ENCODE measurements at regions of chr6 and their contacts with region 1.

Region 1: DNA sequence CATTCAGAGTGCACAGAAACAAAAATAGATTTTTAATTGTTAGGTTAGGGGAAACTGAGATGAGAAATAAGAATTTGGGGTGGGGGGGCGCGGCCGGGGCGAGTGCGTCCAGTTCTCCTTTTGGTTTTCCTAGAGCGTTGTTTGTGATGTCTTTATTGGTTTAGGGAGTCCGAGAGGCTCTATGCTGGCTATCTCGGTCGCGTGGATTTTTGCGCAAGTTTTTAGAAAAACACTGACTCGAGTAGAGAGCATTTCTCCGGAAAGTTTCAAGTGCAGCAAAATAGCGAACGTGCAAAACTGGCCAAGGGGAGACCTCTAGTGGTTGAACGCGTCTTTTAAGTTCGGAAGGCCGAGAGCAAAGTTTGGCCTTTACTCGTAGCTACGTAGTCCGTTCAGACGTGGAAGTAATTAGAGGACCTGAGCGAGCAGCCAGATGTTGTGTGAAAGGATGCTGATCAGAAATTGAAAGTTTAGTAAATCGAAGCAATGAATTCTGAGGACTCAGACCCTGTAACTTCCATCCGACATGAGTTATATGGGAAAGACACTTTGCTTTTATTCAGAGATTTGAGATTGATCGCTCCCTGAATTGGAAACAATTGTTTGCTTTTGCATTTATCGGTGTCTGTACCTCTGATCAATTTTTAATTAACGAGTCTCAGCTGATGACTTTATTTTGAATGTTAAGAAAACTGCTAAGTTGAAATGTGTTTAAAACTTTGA is 2.7 kb downstream of the L3MBTL3 start:
- DNase-seq: peak; percentile 84
- H3K4me3 ChIP-seq: peak overlapping the region; percentile 57 to 78 (median 76)
- H3K27ac ChIP-seq: no peak overlapping the region
- H3K4me1 ChIP-seq: peaks cover 8% of the 10 kb centered on the region
- H3K27me3 ChIP-seq: no peaks in the 10 kb centered on the region
- CTCF ChIP-seq: peak; percentile 73 to 88

Region 2: DNA sequence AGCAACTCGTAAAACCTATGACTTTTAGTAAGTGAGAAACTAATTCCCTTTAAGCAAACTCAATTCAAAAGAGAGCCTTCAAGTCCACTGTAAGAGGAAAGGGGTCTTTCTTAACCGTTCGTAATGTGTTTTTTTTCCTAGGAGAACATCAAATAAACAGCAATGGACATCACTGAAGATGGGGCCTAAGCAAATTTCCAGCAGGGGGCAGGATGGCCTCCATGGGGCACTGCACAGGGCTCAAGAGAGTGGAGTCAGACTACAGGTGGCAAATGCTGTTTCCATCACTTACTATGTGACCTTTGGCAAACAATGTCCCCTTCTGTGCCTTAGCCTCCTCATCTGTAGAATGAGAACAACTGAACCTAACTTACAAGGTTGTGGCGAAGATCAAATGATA is 399.8 kb before region 1 on chr6:
- CTCF ChIA-PET with region 1: no interaction called
- dilution Hi-C with region 1: no loop called
- in situ Hi-C with region 1: loop called in 1 of 2 experiments (anchors 25 kb)
- intact Hi-C with region 1: no loop called
- DNase-seq: no peak
- H3K4me3 ChIP-seq: no peak overlapping the region
- H3K27ac ChIP-seq: no peak overlapping the region
- H3K4me1 ChIP-seq: peaks cover 8% of the 10 kb centered on the region
- H3K27me3 ChIP-seq: no peaks in the 10 kb centered on the region
- CTCF ChIP-seq: peak in 1 of 2 donors; percentile 52

Region 3: GRCh38 chr6:129774697-129775447 is 246.2 kb before region 1 on chr6:
- CTCF ChIA-PET with region 1: no interaction called
- dilution Hi-C with region 1: no loop called
- in situ Hi-C with region 1: no loop called
- intact Hi-C with region 1: loop called (anchors 1 kb)
- DNase-seq: peak; percentile 53
- H3K4me3 ChIP-seq: no peak overlapping the region
- H3K27ac ChIP-seq: no peak overlapping the region
- H3K4me1 ChIP-seq: no peaks in the 10 kb centered on the region
- H3K27me3 ChIP-seq: no peaks in the 10 kb centered on the region
- CTCF ChIP-seq: peak; percentile 99

Region 4: GRCh38 chr6:129893640-129894039 is 127.4 kb before region 1 on chr6:
- CTCF ChIA-PET with region 1: no interaction called
- dilution Hi-C with region 1: no loop called
- in situ Hi-C with region 1: no loop called
- intact Hi-C with region 1: loop called (anchors 1 kb)
- DNase-seq: peak; percentile 15
- H3K4me3 ChIP-seq: no peak overlapping the region
- H3K27ac ChIP-seq: no peak overlapping the region
- H3K4me1 ChIP-seq: peaks cover 26% of the 10 kb centered on the region
- H3K27me3 ChIP-seq: no peaks in the 10 kb centered on the region
- CTCF ChIP-seq: peak; percentile 44

Region 5: GRCh38 chr6:129936329-129937165 is 84.5 kb before region 1 on chr6:
- CTCF ChIA-PET with region 1: no interaction called
- dilution Hi-C with region 1: no loop called
- in situ Hi-C with region 1: no loop called
- intact Hi-C with region 1: loop called (anchors 2 kb)
- DNase-seq: peak; percentile 62
- H3K4me3 ChIP-seq: peak overlapping the region in 1 of 3 experiments; percentile 6
- H3K27ac ChIP-seq: no peak overlapping the region
- H3K4me1 ChIP-seq: no peaks in the 10 kb centered on the region
- H3K27me3 ChIP-seq: no peaks in the 10 kb centered on the region
- CTCF ChIP-seq: peak; percentile 53 to 70

Region 6: GRCh38 chr6:131803007-131803769 is 1782.1 kb after region 1 on chr6:
- CTCF ChIA-PET with region 1: no interaction called
- dilution Hi-C with region 1: no loop called
- in situ Hi-C with region 1: no loop called
- intact Hi-C with region 1: no loop called
- DNase-seq: no peak
- H3K4me3 ChIP-seq: no peak overlapping the region
- H3K27ac ChIP-seq: no peak overlapping the region
- H3K4me1 ChIP-seq: peaks cover 2% of the 10 kb centered on the region
- H3K27me3 ChIP-seq: peaks cover 5% of the 10 kb centered on the region
- CTCF ChIP-seq: no peak